Sigmoid colon (tissue), 7 donors: ENCODE measurements at regions of chr22 and their contacts with region 1.

Region 1: GRCh38 chr22:39532215-39533071 is at the start of gene RPS19BP1:
- DNase-seq: peak; percentile 100
- H3K4me3 ChIP-seq: peak within 1 kb of the TSS; percentile 60 to 98 (median 78)
- H3K27ac ChIP-seq: peak within 1 kb of the TSS; percentile 85 to 99 (median 88)
- H3K4me1 ChIP-seq: peaks cover 3 to 60% (median 57%) of the 10 kb centered on the region in 4 donors
- H3K27me3 ChIP-seq: no peaks in the 10 kb centered on the region
- CTCF ChIP-seq: no peak
- EP300 ChIP-seq: peak in 1 of 4 donors; percentile 76
- POLR2A ChIP-seq: peak; percentile 84 to 89
- total RNA-seq, gene RPS19BP1: 148 to 217 (median 189) TPM

Region 2: GRCh38 chr22:39152511-39153219 is 379.8 kb before region 1 on chr22 and contains the start of gene CBX7:
- intact Hi-C with region 1: loop called (anchors 5 kb)
- DNase-seq: peak; percentile 98
- H3K4me3 ChIP-seq: peak within 1 kb of the TSS; percentile 75 to 99 (median 98)
- H3K27ac ChIP-seq: peak within 1 kb of the TSS; percentile 95 to 99 (median 98)
- H3K4me1 ChIP-seq: peaks cover 0 to 54% (median 42%) of the 10 kb centered on the region in 4 donors
- H3K27me3 ChIP-seq: no peaks in the 10 kb centered on the region
- CTCF ChIP-seq: no peak
- EP300 ChIP-seq: no peak
- POLR2A ChIP-seq: peak; percentile 88 to 93
- total RNA-seq, gene CBX7: 108 to 166 (median 125) TPM

Region 3: GRCh38 chr22:39395936-39396796 is 136.3 kb before region 1 on chr22:
- intact Hi-C with region 1: loop called (anchors 5 kb)
- DNase-seq: no peak
- H3K4me3 ChIP-seq: no peak overlapping the region
- H3K27ac ChIP-seq: no peak overlapping the region
- H3K4me1 ChIP-seq: peaks cover 0 to 11% (median 10%) of the 10 kb centered on the region in 4 donors
- H3K27me3 ChIP-seq: no peaks in the 10 kb centered on the region
- CTCF ChIP-seq: no peak
- EP300 ChIP-seq: no peak
- POLR2A ChIP-seq: no peak

Region 4: DNA sequence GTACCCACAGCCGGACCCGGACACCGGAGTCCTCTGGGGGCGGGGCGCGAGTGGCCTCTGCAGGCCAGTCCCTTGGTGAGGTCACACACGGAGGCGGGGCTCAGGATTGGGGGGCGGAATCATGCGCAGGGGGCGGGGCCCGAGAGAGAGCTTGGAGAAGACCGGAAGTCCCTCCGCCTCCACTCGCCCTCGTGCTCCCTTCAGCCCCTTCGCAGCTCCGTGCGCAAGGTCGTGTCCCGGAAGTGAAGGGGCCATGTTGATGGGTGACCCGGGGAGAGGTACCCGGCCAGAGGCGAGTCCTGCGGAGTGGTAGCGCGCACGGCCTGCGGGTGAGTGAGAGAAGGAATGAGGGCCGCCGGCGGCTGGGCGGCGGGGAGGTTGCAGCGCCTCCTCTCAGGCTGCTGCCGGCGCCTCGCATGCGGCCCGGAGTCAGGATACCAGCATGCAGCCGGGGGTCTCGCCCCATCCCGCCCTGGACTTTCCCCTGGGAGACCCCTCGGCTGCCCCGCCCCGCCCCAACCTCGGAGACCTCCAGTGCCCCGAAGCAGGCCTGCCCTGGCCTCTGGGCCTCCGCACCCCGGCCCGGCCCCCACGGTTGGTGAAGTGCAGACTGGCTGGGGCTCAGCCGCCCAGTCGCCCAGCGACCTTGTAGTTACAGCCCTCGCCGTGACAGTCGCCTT is 30.2 kb before region 1 on chr22 and contains the start of gene MIEF1:
- intact Hi-C with region 1: no loop called
- DNase-seq: peak; percentile 99
- H3K4me3 ChIP-seq: peak within 1 kb of the TSS; percentile 95 to 100 (median 100)
- H3K27ac ChIP-seq: peak within 1 kb of the TSS; percentile 74 to 95 (median 84)
- H3K4me1 ChIP-seq: peaks cover 0 to 42% (median 29%) of the 10 kb centered on the region in 4 donors
- H3K27me3 ChIP-seq: no peaks in the 10 kb centered on the region
- CTCF ChIP-seq: no peak
- EP300 ChIP-seq: peak in 1 of 4 donors; percentile 39
- POLR2A ChIP-seq: peak; percentile 29 to 45
- total RNA-seq, gene MIEF1: 11.8 to 19.7 (median 14.2) TPM

Region 5: GRCh38 chr22:39598017-39598965 is 65.8 kb after region 1 on chr22:
- intact Hi-C with region 1: no loop called
- DNase-seq: no peak
- H3K4me3 ChIP-seq: no peak overlapping the region
- H3K27ac ChIP-seq: no peak overlapping the region
- H3K4me1 ChIP-seq: no peaks in the 10 kb centered on the region
- H3K27me3 ChIP-seq: peaks cover 4 to 52% (median 21%) of the 10 kb centered on the region in 3 donors
- CTCF ChIP-seq: no peak
- EP300 ChIP-seq: no peak
- POLR2A ChIP-seq: no peak

Region 6: DNA sequence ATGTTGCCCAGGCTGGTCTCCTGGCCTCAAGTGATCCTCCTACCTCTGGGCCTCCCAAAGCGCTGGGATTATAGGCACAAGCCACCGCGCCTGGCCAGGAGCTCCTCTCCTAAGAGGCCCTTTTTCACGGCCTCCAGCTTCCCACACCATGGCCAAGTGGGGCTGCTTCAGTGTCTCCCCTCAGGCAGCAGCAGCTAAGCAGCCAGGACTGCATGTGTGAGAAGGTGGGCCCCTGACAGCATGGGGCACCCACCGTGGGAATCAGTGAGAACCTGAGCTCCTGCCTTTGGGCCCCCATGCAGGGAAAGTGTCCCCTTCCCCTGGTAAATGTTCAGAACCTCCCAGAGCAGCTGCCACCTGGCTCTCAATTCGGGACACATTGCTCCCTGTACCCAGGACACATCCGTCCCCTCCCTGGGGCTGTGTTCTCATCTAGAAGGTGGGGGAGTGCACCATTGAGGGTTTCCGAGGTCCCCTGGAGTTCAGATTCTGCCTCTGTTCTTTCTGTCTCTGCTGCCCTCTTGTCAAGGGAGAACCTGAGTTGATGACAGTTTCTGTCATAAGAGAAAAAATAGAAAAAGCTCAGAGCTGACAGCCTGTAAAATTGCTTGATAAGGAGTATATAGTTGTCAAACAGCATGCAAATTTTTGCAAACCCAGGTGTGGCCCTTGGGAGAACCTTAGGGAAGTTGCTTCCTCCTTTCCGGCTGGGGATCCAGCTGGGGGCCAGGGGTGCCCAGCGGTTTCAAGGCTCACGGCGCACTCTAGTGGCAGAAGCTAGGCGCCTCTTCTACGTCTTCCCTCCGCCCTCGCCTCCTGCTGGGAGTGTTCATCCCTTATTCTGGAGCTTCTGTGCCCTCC is 492.0 kb after region 1 on chr22:
- intact Hi-C with region 1: loop called (anchors 2 kb)
- DNase-seq: peak; percentile 74
- H3K4me3 ChIP-seq: no peak overlapping the region
- H3K27ac ChIP-seq: no peak overlapping the region
- H3K4me1 ChIP-seq: no peaks in the 10 kb centered on the region
- H3K27me3 ChIP-seq: peaks cover 0 to 13% (median 0%) of the 10 kb centered on the region in 3 donors
- CTCF ChIP-seq: peak; percentile 61 to 82 (median 75)
- EP300 ChIP-seq: no peak
- POLR2A ChIP-seq: no peak

Region 7: DNA sequence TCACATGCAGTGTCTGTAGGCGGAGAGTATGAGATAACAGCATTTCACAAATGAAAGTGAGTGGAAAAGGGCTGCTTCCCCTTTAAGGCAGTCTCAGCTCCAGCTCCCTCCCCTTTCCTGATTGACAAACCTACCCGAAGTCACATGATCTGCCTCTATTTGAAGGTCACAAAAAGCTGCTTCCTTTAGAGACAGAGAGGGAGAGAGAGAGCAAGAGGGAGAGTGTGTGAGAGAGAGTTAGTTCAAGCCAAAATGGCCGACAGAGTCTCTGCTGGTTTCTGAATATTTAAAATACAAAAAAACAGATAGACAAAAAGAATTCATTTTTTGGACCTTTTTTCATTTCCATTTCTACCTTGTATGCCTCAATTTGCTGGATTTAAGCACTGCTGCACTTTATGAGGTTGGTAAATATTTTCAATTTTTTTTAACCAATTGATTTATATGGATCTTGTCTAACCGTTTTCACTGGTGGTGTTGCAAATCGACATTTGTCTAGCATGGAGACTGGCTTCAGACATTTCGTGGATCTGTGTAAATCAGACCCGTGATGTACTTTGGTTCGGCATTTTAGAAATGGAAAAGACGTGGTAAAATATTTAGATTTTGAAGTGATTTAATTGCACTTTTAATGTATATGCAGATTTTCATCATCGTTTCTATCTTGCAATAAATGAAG is 645.4 kb after region 1 on chr22 and contains the start of gene TNRC6B:
- intact Hi-C with region 1: loop called (anchors 5 kb)
- DNase-seq: peak; percentile 88
- H3K4me3 ChIP-seq: peak within 1 kb of the TSS; percentile 52 to 71 (median 54)
- H3K27ac ChIP-seq: peak within 1 kb of the TSS; percentile 80 to 90 (median 81)
- H3K4me1 ChIP-seq: peaks cover 0 to 65% (median 59%) of the 10 kb centered on the region in 4 donors
- H3K27me3 ChIP-seq: no peaks in the 10 kb centered on the region
- CTCF ChIP-seq: no peak
- EP300 ChIP-seq: peak in 1 of 4 donors; percentile 26
- POLR2A ChIP-seq: peak; percentile 98
- total RNA-seq, gene TNRC6B: 26.5 to 51.8 (median 28.1) TPM

Region 8: GRCh38 chr22:40346178-40347118 is 814.0 kb after region 1 on chr22 and contains the start of gene ADSL:
- intact Hi-C with region 1: loop called (anchors 2 kb)
- DNase-seq: peak; percentile 93
- H3K4me3 ChIP-seq: peak within 1 kb of the TSS; percentile 67 to 73 (median 69)
- H3K27ac ChIP-seq: peak within 1 kb of the TSS; percentile 87 to 90 (median 89)
- H3K4me1 ChIP-seq: peaks cover 0 to 24% (median 21%) of the 10 kb centered on the region in 4 donors
- H3K27me3 ChIP-seq: no peaks in the 10 kb centered on the region
- CTCF ChIP-seq: no peak
- EP300 ChIP-seq: no peak
- POLR2A ChIP-seq: peak; percentile 77 to 79
- total RNA-seq, gene ADSL: 86.7 to 469 (median 111) TPM